ENCODE measurements at regions of chr1 and their contacts with region 1.

Region 1: GRCh38 chr1:116255486-116256285 is 117.4 kb upstream of the ATP1A1 start:
- DNase-seq: no peak
- H3K4me3 ChIP-seq: no peak overlapping the region
- H3K27ac ChIP-seq: no peak overlapping the region
- H3K4me1 ChIP-seq: no peaks in the 10 kb centered on the region
- H3K27me3 ChIP-seq: no peaks in the 10 kb centered on the region
- CTCF ChIP-seq: no peak
- POLR2A ChIP-seq: no peak

Region 2: GRCh38 chr1:116218990-116219321 is 36.7 kb before region 1 on chr1:
- intact Hi-C with region 1: loop called (anchors 1 kb)
- DNase-seq: no peak
- H3K4me3 ChIP-seq: no peak overlapping the region
- H3K27ac ChIP-seq: no peak overlapping the region
- H3K4me1 ChIP-seq: no peaks in the 10 kb centered on the region
- H3K27me3 ChIP-seq: no peaks in the 10 kb centered on the region
- CTCF ChIP-seq: no peak
- POLR2A ChIP-seq: no peak

Region 3: GRCh38 chr1:116288201-116288761 is 32.6 kb after region 1 on chr1:
- intact Hi-C with region 1: no loop called
- DNase-seq: no peak
- H3K4me3 ChIP-seq: no peak overlapping the region
- H3K27ac ChIP-seq: no peak overlapping the region
- H3K4me1 ChIP-seq: no peaks in the 10 kb centered on the region
- H3K27me3 ChIP-seq: no peaks in the 10 kb centered on the region
- CTCF ChIP-seq: no peak
- POLR2A ChIP-seq: no peak

Region 4: GRCh38 chr1:116311756-116312691 is 56.3 kb after region 1 on chr1:
- intact Hi-C with region 1: no loop called
- DNase-seq: peak; percentile 63 to 78
- H3K4me3 ChIP-seq: no peak overlapping the region
- H3K27ac ChIP-seq: peak overlapping the region; percentile 85
- H3K4me1 ChIP-seq: peaks cover 0 to 20% of the 10 kb centered on the region in 2 donors
- H3K27me3 ChIP-seq: no peaks in the 10 kb centered on the region
- CTCF ChIP-seq: no peak
- POLR2A ChIP-seq: no peak

Measured in breast epithelium (tissue), 4 donors.